ENCODE measurements at regions of chr5 and their contacts with region 1.

Region 1: GRCh38 chr5:140346348-140347101 is at the start of gene HBEGF:
- DNase-seq: peak; percentile 94
- H3K4me3 Mint-ChIP-seq: peak within 1 kb of the TSS; percentile 78
- H3K27ac Mint-ChIP-seq: peak within 1 kb of the TSS; percentile 54
- H3K4me1 Mint-ChIP-seq: peaks cover 47% of the 10 kb centered on the region
- H3K27me3 Mint-ChIP-seq: no peaks in the 10 kb centered on the region
- CTCF ChIP-seq: peak; percentile 62
- total RNA-seq, gene HBEGF: 20.6 and 55.7 TPM in 2 replicates

Region 2: GRCh38 chr5:140113699-140114263 is 232.7 kb before region 1 on chr5 and contains the start of gene PURA:
- CTCF ChIA-PET with region 1: interaction called, 5 read pairs
- POLR2A ChIA-PET with region 1: interaction called, 10 read pairs
- intact Hi-C with region 1: no loop called
- DNase-seq: peak; percentile 98
- H3K4me3 Mint-ChIP-seq: peak within 1 kb of the TSS; percentile 88
- H3K27ac Mint-ChIP-seq: peak within 1 kb of the TSS; percentile 87
- H3K4me1 Mint-ChIP-seq: peaks cover 70% of the 10 kb centered on the region
- H3K27me3 Mint-ChIP-seq: no peaks in the 10 kb centered on the region
- CTCF ChIP-seq: peak; percentile 9
- total RNA-seq, gene PURA: 20.1 and 24.6 TPM in 2 replicates

Region 3: DNA sequence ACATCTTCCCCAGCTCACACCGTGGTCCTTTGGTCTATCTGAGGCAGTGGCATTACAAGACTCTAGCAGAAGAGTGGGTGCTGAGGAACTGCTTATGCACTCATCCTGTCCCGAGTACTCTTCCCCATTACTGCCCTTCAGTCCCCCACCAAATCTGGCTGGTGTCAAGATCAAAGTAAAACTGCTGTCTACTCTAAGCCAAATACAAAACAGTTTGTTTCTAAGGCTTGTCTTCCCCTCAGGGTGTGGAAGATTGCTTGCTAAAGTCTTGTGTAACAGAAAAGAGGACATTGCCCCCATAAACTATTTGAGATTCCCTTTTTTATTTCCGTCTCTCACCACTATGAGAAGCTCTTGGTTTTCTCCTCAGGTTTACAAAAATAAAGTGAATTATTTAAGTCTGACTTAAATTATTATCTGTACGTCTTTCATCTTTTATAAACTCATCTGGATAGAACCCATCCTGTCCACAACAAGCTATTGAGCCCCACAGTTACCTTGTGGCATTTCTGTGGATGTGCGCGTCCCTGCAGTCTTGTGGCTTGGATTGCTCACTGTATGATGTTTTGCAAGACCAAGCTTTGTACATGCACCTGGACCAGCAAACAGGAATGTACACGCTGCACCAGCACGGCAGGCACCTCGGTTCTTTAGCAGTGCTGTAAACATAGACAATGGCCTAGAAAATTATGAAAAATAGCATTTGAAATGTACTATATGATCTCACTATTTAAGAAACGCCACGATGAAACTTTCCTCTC is 110.6 kb before region 1 on chr5:
- CTCF ChIA-PET with region 1: interaction called, 1,450 read pairs
- POLR2A ChIA-PET with region 1: interaction called, 135 read pairs
- intact Hi-C with region 1: no loop called
- DNase-seq: no peak
- H3K4me3 Mint-ChIP-seq: no peak overlapping the region
- H3K27ac Mint-ChIP-seq: no peak overlapping the region
- H3K4me1 Mint-ChIP-seq: peaks cover 23% of the 10 kb centered on the region
- H3K27me3 Mint-ChIP-seq: no peaks in the 10 kb centered on the region
- CTCF ChIP-seq: no peak

Region 4: GRCh38 chr5:140261403-140262171 is 84.9 kb before region 1 on chr5:
- CTCF ChIA-PET with region 1: interaction called, 1,450 read pairs
- POLR2A ChIA-PET with region 1: interaction called, 136 read pairs
- intact Hi-C with region 1: loop called (anchors 1 kb)
- DNase-seq: peak; percentile 95
- H3K4me3 Mint-ChIP-seq: no peak overlapping the region
- H3K27ac Mint-ChIP-seq: peak overlapping the region; percentile 85
- H3K4me1 Mint-ChIP-seq: peaks cover 53% of the 10 kb centered on the region
- H3K27me3 Mint-ChIP-seq: no peaks in the 10 kb centered on the region
- CTCF ChIP-seq: no peak

Region 5: DNA sequence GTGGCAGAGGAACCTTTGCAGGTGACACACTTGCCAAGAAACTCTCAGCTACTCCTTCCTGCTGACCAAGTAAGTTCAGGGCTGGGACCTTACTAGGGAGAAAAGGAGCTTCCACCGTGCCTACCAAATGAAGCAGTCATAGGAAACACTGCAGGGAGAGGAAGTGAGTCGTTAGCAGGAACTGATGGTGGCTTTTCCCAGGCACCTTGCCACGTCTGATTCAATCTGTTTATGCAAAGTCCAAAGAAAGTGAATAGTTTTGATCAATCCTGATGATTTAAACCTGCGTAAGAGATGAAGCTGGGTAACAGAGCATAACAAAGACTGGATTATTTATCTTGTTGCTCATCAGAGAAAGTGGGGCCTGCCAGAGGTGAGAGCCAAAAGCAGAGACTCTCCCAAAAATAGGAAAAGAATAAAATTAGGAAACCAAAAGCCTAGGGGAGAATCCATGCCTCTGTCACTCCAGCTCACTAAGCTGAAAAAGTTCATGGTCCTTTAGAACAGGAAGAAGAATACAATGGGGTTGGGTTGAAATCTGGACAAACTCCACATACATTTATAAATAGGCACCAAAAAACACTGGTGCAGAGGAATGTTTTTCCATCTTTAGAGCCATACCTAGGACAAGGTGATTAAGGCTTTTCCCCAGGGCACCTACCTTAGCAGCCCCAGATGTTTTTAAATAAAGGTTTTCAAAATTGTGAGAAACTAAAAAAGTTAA is 34.3 kb before region 1 on chr5:
- CTCF ChIA-PET with region 1: interaction called, 52 read pairs
- POLR2A ChIA-PET with region 1: interaction called, 22 read pairs
- intact Hi-C with region 1: no loop called
- DNase-seq: peak; percentile 95
- H3K4me3 Mint-ChIP-seq: no peak overlapping the region
- H3K27ac Mint-ChIP-seq: peak overlapping the region; percentile 60
- H3K4me1 Mint-ChIP-seq: peaks cover 22% of the 10 kb centered on the region
- H3K27me3 Mint-ChIP-seq: no peaks in the 10 kb centered on the region
- CTCF ChIP-seq: no peak

Region 6: GRCh38 chr5:140357726-140358093 is 11.2 kb after region 1 on chr5:
- CTCF ChIA-PET with region 1: interaction called, 58 read pairs
- POLR2A ChIA-PET with region 1: interaction called, 7 read pairs
- intact Hi-C with region 1: loop called (anchors 1 kb)
- DNase-seq: peak; percentile 91
- H3K4me3 Mint-ChIP-seq: peak overlapping the region; percentile 33
- H3K27ac Mint-ChIP-seq: no peak overlapping the region
- H3K4me1 Mint-ChIP-seq: peaks cover 8% of the 10 kb centered on the region
- H3K27me3 Mint-ChIP-seq: no peaks in the 10 kb centered on the region
- CTCF ChIP-seq: peak; percentile 97